Pancreas (tissue), 10 donors: ENCODE measurements at regions of chr6 and their contacts with region 1.

Region 1: GRCh38 chr6:43129434-43130194 is 41.5 kb upstream of the SRF start:
- DNase-seq: no peak
- ATAC-seq: peak in 3 of 4 donors; percentile 63 to 79 (median 69)
- H3K4me3 ChIP-seq: no peak overlapping the region
- H3K27ac ChIP-seq: no peak overlapping the region
- H3K4me1 ChIP-seq: no peaks in the 10 kb centered on the region
- H3K27me3 ChIP-seq: no peaks in the 10 kb centered on the region
- CTCF ChIP-seq: no peak

Region 2: DNA sequence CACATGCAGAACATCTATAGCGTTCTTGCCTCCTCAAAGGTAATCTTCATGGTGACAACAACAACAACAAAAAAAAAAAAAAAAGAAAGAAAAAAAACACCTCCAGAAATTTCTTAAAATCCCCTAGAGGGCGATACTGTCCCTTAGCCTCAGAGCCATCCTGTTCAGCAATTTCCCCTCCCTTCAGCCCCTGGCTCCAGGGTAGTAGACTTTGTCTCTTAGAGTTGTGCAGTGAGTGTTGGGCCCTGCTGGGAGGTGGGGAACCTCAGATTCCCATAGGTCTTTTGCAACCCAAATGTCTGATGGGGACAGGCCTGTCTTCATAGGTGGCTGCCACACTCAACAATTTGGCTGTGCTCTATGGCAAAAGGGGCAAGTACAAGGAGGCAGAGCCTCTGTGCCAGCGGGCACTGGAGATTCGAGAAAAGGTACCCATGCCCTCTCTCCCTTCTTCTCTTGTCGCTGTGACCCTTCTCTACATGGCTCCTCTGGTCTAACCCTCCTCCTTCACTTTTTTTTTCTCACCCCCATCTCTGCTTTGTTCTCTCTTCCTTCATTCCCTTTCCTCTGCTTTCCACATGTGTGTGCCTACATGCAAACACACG is 59.5 kb before region 1 on chr6:
- intact Hi-C with region 1: loop called in 1 of 3 experiments (anchors 10 kb)
- DNase-seq: no peak
- ATAC-seq: peak; percentile 35 to 62 (median 60)
- H3K4me3 ChIP-seq: no peak overlapping the region
- H3K27ac ChIP-seq: no peak overlapping the region
- H3K4me1 ChIP-seq: no peaks in the 10 kb centered on the region
- H3K27me3 ChIP-seq: no peaks in the 10 kb centered on the region
- CTCF ChIP-seq: peak in 2 of 4 donors; percentile 17 to 26

Region 3: GRCh38 chr6:43089874-43090558 is 39.6 kb before region 1 on chr6:
- intact Hi-C with region 1: loop called in 1 of 3 experiments (anchors 10 kb)
- DNase-seq: no peak
- ATAC-seq: peak in 2 of 4 donors; percentile 24 to 30
- H3K4me3 ChIP-seq: no peak overlapping the region
- H3K27ac ChIP-seq: peak overlapping the region; percentile 43 to 74 (median 70)
- H3K4me1 ChIP-seq: no peaks in the 10 kb centered on the region
- H3K27me3 ChIP-seq: no peaks in the 10 kb centered on the region
- CTCF ChIP-seq: no peak

Region 4: GRCh38 chr6:43477235-43478007 is 347.8 kb after region 1 on chr6 and contains the start of gene TJAP1:
- intact Hi-C with region 1: no loop called
- DNase-seq: peak; percentile 92 to 98 (median 95)
- ATAC-seq: peak; percentile 100
- H3K4me3 ChIP-seq: peak within 1 kb of the TSS; percentile 49 to 71 (median 59)
- H3K27ac ChIP-seq: peak within 1 kb of the TSS; percentile 29 to 73 (median 60)
- H3K4me1 ChIP-seq: peaks cover 6 to 17% (median 13%) of the 10 kb centered on the region in 3 donors
- H3K27me3 ChIP-seq: no peaks in the 10 kb centered on the region
- CTCF ChIP-seq: no peak
- total RNA-seq, gene TJAP1: 12.9 to 26.7 (median 15.4) TPM

Region 5: DNA sequence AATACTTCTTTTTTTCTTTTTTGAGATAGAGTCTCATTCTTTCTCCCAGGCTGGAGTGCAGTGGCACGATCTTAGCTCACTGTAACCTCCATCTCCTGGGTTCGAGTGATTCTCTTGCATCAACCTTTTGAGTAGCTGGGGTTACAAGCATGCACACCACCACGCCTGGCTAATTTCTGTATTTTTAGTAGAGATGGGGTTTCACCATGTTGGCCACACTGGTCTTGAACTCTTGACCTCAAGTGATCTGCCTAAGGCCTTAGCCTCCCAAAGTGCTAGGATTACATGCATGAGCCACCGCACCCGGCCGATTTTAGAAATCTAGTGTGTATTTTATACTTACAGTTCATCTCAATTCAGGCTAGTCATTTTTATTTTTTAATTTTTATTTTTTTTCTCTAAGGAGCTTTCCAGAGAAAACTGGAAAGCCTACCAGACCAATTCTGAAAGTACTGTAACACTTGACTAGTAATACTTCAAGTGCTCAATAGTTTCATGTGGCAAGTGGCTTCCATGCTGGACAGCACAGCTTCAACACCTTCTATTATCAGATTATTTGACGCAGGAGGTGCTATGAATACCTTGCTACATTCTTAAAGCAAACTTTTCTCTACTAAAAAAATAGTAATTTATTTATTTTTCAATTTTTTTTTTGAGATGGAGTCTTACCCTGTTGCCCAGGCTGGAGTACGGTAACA is 412.3 kb after region 1 on chr6:
- intact Hi-C with region 1: no loop called
- DNase-seq: no peak
- ATAC-seq: no peak
- H3K4me3 ChIP-seq: no peak overlapping the region
- H3K27ac ChIP-seq: no peak overlapping the region
- H3K4me1 ChIP-seq: no peaks in the 10 kb centered on the region
- H3K27me3 ChIP-seq: no peaks in the 10 kb centered on the region
- CTCF ChIP-seq: no peak